ENCODE measurements at regions of chr4 and their contacts with region 1.

Region 1: DNA sequence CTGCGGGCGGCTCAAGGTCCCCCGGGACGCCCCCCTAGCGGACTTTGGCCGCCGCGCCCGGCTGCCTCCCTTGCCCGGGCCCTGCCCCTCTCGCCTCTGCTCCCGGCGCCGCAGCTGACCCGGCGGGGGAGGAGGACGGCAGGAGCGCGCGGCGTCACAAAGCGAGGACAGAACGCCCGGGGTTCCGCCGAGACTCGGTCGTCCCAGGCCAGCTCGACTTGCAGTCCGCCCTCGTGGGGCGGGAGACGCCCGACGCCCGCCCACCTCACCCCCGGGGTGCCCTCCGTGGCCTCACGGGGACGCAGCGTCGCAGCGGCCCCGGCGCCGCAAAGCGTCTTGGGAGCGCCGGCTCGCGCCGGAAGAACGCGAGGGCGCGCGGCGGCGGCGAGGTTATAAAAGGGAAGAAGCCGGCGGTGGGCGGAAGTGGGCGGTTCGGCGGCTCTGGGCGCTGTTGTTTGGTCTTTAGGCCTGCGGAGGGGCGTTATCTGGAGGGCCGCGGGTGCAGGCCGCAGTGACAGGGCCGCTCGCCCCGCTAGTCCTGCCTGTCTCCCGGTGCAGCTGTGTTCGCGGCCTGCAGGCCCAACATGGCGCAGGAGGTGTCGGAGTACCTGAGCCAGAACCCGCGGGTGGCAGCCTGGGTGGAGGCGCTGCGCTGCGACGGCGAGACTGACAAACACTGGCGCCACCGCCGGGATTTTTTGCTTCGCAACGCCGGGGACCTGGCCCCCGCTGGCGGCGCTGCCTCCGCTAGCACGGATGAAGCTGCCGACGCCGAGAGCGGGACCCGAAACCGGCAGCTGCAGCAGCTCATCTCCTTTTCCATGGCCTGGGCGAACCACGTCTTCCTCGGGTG is at the start of gene CDKN2AIP:
- DNase-seq: peak; percentile 91 to 96
- H3K4me3 ChIP-seq: peak within 1 kb of the TSS; percentile 84 to 97
- H3K27ac ChIP-seq: peak within 1 kb of the TSS; percentile 93 to 98
- H3K4me1 ChIP-seq: peaks cover 0 to 50% (median 27%) of the 10 kb centered on the region in 4 donors
- H3K27me3 ChIP-seq: no peaks in the 10 kb centered on the region
- CTCF ChIP-seq: peak in 1 of 2 experiments; percentile 8

Region 2: GRCh38 chr4:183430317-183430993 is 14.0 kb before region 1 on chr4:
- intact Hi-C with region 1: no loop called
- DNase-seq: no peak
- H3K4me3 ChIP-seq: no peak overlapping the region
- H3K27ac ChIP-seq: no peak overlapping the region
- H3K4me1 ChIP-seq: no peaks in the 10 kb centered on the region
- H3K27me3 ChIP-seq: peaks cover 0 to 3% of the 10 kb centered on the region in 2 donors
- CTCF ChIP-seq: no peak

Region 3: DNA sequence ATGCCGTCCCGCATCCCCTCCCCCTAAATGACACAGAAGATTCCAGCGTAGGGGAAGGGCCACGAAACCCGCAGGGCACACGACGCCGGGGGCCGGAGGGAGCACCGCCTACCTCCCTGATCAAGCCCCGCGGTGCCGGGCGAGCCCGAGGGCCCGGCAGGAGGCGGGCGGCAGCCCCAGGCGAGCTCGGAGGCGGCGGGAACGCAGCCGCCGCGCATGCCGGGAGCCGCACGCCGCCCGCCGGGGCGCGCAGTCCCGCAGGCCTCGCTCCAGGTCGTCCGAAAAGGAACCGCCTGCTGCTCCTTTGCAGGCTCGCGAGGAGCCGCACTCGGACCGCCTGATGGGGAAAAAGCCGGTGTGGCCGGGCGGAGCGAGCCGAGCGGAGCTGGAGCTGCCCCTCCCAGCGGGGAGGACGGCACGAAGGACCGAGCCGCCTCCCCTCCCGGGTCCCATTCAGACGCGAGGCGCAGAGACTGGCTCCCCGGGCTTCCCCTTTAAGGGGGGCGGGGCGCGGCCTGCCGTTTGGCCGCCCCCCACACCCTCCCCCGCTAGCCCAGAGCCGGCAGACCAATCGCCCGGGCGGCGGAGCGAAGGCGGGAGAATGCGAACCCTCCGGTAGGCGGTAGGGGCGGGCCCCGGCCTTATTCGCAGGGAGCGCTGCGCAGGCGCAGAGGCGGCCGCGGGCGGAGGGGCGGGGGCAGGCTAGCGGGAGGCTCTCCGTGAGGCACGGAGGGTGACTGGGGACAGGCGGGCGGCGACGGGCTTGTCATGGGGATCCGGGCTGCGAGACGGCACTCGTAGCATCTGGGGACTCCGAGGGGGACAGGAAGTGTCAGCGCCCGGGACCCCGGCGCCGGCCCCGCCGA is 59.9 kb after region 1 on chr4:
- intact Hi-C with region 1: loop called (anchors 2 kb)
- DNase-seq: peak; percentile 99 to 100
- H3K4me3 ChIP-seq: peak overlapping the region; percentile 79 to 92
- H3K27ac ChIP-seq: peak overlapping the region; percentile 92 to 94
- H3K4me1 ChIP-seq: peaks cover 0 to 19% (median 3%) of the 10 kb centered on the region in 4 donors
- H3K27me3 ChIP-seq: no peaks in the 10 kb centered on the region
- CTCF ChIP-seq: peak in 1 of 2 experiments; percentile 23

Measured in tibial artery (tissue), 4 donors.